ENCODE measurements at regions of chr20 and their contacts with region 1.

Region 1: GRCh38 chr20:10708351-10709185 is 34.8 kb upstream of the JAG1 start:
- DNase-seq: no peak
- ATAC-seq: no peak
- H3K4me3 ChIP-seq: no peak overlapping the region
- H3K27ac ChIP-seq: no peak overlapping the region
- H3K4me1 ChIP-seq: peaks cover 0 to 7% (median 0%) of the 10 kb centered on the region in 9 donors
- H3K27me3 ChIP-seq: no peaks in the 10 kb centered on the region
- CTCF ChIP-seq: no peak

Region 2: GRCh38 chr20:10761232-10761631 is 52.7 kb after region 1 on chr20:
- intact Hi-C with region 1: loop called in 1 of 10 experiments (anchors 10 kb)
- DNase-seq: no peak
- ATAC-seq: no peak
- H3K4me3 ChIP-seq: no peak overlapping the region
- H3K27ac ChIP-seq: peak overlapping the region in 1 of 10 donors; percentile 0
- H3K4me1 ChIP-seq: peaks cover 0 to 6% (median 0%) of the 10 kb centered on the region in 9 donors
- H3K27me3 ChIP-seq: no peaks in the 10 kb centered on the region
- CTCF ChIP-seq: no peak

Region 3: DNA sequence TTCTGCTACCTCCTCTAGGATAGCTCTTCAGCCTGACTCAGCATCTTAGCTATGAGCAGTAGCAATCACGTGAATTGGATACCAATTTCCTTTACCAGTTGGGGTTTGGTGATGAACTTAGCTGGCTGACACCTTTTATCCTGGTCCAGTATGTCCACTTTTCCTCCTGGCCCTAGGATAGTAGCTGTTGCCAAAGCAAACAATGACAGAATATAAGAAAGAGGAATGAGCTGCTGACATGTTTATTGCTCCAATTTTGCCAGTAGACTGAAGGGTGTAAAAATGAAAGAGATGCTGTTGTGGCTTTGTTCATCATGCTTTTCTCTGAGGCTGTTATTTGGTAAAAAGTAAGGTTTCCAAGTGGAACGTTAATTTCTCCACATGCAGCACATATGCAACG is 133.5 kb after region 1 on chr20:
- intact Hi-C with region 1: no loop called
- DNase-seq: no peak
- ATAC-seq: no peak
- H3K4me3 ChIP-seq: no peak overlapping the region
- H3K27ac ChIP-seq: no peak overlapping the region
- H3K4me1 ChIP-seq: no peaks in the 10 kb centered on the region
- H3K27me3 ChIP-seq: no peaks in the 10 kb centered on the region
- CTCF ChIP-seq: no peak

Region 4: DNA sequence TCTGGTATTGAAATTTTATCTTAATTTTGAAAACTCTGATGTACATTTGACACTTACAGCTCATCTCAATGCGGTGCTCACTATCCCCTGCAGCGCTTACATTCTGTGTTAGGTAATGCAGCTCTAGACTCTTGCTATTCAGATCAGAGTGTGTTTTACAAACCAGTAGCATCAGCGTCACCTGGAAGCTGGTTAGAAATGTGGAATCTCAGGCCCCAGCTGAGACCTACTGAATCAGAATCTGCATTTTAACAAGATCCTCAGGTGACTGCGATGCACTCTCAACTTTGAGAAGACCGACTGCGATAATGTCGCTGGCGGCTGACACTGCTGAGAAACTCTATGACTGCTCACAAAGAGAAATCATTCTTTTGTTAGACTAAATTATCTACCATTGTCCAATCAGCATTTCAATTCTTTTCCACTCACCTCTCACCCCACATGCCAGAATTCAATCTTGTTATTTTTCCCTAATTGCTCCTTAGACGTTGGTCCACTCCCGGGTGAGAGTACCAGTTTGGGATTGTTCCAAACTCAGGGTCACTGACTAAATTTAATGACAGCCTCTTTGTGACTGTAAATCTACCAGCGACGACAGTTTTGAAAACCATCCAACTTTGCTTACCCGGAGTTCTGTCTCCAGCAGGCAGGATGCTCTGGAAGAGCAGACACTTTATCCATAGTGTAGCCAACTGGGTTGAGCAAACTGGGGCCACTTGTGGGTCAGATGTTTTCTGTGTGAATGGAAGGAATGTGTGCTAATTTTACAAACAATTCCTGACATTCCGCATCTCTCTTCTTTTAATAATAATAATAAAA is 1069.0 kb after region 1 on chr20:
- intact Hi-C with region 1: no loop called
- DNase-seq: no peak
- ATAC-seq: no peak
- H3K4me3 ChIP-seq: peak overlapping the region in 5 of 10 donors; percentile 21 to 33 (median 26)
- H3K27ac ChIP-seq: peak overlapping the region in 2 of 10 donors; percentile 32 to 37
- H3K4me1 ChIP-seq: peaks cover 0 to 8% (median 0%) of the 10 kb centered on the region in 9 donors
- H3K27me3 ChIP-seq: no peaks in the 10 kb centered on the region
- CTCF ChIP-seq: no peak